Gastrocnemius medialis (tissue), 4 donors: ENCODE measurements at regions of chr19 and their contacts with region 1.

Region 1: DNA sequence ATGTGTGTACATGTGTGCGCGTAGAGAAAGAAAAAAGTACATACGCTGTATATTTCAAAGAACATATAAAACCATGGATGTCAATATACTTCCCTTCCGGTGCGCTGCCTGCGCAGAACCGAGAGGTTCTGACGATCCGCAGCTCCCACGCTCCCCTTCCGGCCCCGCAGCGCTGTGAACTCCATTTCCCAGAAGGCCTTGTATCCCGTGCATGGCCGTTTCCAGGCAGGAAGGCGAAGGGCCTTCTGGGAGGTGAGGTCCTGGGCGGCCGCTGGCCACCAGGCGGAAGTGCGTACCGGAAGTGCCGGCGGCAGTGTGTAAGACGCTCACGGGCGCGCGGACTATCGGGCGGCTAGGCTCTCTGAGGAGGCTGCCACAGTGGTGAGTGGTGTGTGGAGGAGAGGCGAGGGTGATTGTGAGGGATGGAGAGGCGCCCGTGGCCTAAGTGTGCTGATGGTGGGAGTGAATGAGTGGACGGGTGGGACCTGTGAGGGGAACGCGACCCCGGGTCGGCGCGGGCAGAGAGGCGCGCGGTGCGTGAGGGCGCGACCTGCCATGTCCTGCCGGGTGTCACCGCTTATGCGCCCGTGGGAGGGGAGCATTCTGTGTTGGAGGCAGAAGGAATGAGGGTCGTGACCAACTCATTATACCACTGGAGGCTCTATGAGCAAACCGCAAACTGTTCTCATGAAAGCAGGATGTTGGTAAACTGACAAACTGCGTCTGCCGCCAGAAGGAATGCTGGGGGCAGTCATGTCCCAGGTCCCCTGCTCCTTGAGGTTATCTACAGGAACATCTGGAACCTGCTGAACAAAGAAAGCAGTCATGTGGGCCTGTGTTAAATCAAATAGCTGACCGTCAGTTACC is at the start of gene ERVK3-1:
- DNase-seq: peak; percentile 93 to 96
- ATAC-seq: peak; percentile 99
- H3K4me3 ChIP-seq: peak within 1 kb of the TSS; percentile 66 to 93 (median 86)
- H3K27ac ChIP-seq: peak within 1 kb of the TSS; percentile 85 to 93 (median 89)
- H3K4me1 ChIP-seq: peaks cover 12 to 14% of the 10 kb centered on the region in 2 donors
- H3K27me3 ChIP-seq: peaks cover 0 to 5% (median 0%) of the 10 kb centered on the region in 3 donors
- CTCF ChIP-seq: peak in 3 of 5 experiments; percentile 24 to 45 (median 24)
- POLR2A ChIP-seq: peak; percentile 84 to 87
- total RNA-seq, gene ERVK3-1: 27.1 to 38.2 (median 32.4) TPM

Region 2: DNA sequence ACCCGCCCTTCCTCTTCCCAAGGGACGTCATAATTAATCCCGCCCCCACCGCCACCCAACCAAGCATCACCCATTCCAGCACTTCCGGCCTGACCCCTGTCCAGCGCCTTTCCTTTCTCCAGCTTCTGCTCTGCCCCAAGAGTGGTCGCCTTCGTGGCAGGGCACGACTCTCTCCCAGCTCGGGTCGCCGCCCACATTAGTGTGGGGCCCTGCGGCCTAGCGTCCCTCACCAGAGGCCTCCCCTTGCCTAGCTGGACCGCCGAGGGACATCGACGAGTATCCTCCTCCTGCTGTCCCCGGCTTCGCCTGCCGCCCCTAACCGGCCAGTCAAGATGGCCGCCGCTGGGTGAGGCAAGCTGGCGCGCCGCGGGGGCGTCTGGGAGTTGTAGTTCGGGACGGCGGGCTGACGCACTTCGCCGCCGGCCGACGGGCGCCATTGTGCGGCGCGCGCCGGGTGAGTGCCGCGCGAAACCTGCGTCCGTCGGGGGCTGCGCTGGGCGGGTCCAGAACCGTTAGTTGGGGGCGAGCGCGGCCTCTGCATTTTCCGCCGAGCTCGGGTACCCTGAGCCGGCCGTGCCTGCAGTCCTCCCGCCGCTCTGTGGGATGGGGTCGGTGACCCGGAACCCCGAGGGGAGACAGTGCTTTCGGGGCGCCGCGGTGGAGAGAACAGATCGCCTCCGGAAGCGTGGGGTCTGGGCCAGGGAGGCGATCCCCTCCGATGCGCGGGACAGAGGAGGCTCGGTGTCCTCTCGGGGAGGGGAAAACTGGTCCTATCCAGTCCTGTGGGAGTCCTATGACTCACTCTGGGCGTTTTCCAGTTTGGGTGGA is 122.1 kb before region 1 on chr19 and contains the start of gene ZNF274:
- in situ Hi-C with region 1: no loop called
- intact Hi-C with region 1: loop called (anchors 1 kb)
- DNase-seq: peak; percentile 84 to 92
- ATAC-seq: peak; percentile 92 to 95
- H3K4me3 ChIP-seq: peak within 1 kb of the TSS; percentile 82 to 94 (median 92)
- H3K27ac ChIP-seq: peak within 1 kb of the TSS; percentile 92 to 99 (median 98)
- H3K4me1 ChIP-seq: peaks cover 0 to 5% of the 10 kb centered on the region in 2 donors
- H3K27me3 ChIP-seq: no peaks in the 10 kb centered on the region
- CTCF ChIP-seq: no peak
- POLR2A ChIP-seq: peak; percentile 88 to 94
- total RNA-seq, gene ZNF274: 9.0 to 20.7 (median 13.4) TPM

Region 3: GRCh38 chr19:58326914-58327726 is 21.8 kb after region 1 on chr19 and contains the start of gene ZSCAN22:
- in situ Hi-C with region 1: no loop called
- intact Hi-C with region 1: loop called (anchors 1 kb)
- DNase-seq: peak; percentile 95 to 96
- ATAC-seq: peak; percentile 98
- H3K4me3 ChIP-seq: peak within 1 kb of the TSS; percentile 91 to 96 (median 94)
- H3K27ac ChIP-seq: peak within 1 kb of the TSS; percentile 94 to 99 (median 98)
- H3K4me1 ChIP-seq: peaks cover 24 to 29% of the 10 kb centered on the region in 2 donors
- H3K27me3 ChIP-seq: no peaks in the 10 kb centered on the region
- CTCF ChIP-seq: no peak
- POLR2A ChIP-seq: peak; percentile 79 to 81
- total RNA-seq, gene ZSCAN22: 1.1 to 2.4 (median 1.8) TPM

Region 4: DNA sequence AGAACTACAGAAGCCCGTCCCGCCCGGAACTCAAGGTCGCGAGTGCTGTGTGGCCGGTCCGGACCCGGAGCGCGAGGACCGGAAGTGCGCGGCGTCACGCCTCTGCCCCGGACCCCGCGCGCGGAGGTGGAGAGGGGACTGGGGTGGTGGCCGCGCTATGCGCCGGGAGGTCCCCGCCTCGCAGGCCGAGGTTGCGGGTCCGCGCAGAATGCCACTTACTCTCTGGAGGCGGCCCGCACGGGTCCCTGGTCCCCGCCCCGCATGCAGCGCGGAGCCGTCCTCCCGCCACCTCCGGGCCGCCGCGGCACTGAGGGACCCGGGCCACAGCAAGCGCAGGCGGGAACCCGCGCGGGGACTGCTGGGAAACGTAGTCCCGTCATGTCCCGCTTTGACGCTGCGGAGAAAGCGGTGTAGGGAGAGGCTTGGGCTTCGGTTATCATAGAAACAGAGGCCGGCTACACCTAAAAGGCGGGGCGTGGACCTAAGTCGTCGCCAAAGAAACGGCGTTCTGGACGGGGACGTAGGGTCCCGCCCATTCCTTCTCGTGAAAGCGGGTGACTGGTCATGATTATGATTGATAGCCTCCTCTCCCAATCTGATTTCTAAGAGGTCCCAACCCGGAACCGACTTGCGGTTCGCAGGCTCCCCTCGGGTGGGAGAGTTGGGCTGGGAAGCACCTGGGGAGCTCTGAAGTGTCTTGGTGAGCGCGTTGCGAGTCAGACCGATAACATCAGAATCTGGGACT is 75.6 kb after region 1 on chr19 and contains the start of gene ZNF837:
- in situ Hi-C with region 1: no loop called
- intact Hi-C with region 1: loop called (anchors 1 kb)
- DNase-seq: peak; percentile 97 to 100
- ATAC-seq: peak; percentile 96 to 97
- H3K4me3 ChIP-seq: peak within 1 kb of the TSS; percentile 70 to 95 (median 81)
- H3K27ac ChIP-seq: peak within 1 kb of the TSS; percentile 78 to 99 (median 94)
- H3K4me1 ChIP-seq: peaks cover 30 to 36% of the 10 kb centered on the region in 2 donors
- H3K27me3 ChIP-seq: no peaks in the 10 kb centered on the region
- CTCF ChIP-seq: peak in 1 of 5 experiments; percentile 19
- POLR2A ChIP-seq: peak; percentile 82 to 84
- total RNA-seq, gene ZNF837: 0.11 to 0.36 TPM in 2 of 4 donors, not detected in the others

Region 5: DNA sequence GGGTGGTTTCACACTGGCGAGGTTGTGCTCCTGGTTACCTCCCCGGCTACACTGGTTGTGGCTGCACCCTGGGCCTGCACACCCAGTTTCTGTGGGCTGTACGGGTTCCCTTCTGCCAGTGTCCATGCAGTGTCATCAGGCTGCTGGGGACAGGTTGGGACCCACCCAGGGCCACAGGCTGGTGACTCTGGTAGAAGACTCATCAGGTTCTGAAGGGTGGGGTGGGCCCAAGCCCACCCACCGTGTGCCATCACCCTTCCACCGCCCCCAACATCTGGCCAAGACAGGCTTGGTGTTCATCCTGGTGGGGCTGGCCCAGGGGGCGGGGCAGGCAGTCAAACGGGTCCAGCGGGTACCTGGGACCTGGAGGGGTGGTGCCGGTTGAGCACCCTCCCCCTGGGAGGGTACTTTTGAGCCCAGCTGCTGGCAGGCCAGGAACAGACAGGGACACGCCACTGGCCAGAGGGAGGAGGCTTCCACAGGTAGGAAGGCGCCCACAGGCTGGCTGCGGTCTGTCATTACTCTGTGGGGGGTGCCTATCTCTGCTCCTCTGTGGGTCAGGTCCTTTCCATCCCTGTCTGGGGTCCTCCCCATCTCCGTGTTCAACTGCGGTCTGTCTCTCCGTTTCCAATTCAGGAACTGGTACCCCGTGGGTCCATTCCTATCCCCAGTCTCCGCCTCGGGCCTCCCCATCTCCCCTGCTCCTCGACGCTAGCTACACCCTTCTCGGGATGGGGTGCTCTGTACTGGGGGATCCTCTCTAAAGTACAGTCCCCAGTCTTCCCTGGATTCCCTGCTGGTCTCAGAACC is 90.1 kb after region 1 on chr19 and contains the start of gene RNF225:
- in situ Hi-C with region 1: no loop called
- intact Hi-C with region 1: no loop called
- DNase-seq: no peak
- ATAC-seq: no peak
- H3K4me3 ChIP-seq: peak within 1 kb of the TSS in 1 of 4 donors; percentile 3
- H3K27ac ChIP-seq: no peak within 1 kb of the TSS
- H3K4me1 ChIP-seq: peaks cover 5 to 7% of the 10 kb centered on the region in 2 donors
- H3K27me3 ChIP-seq: peaks cover 18 to 25% (median 19%) of the 10 kb centered on the region in 3 donors
- CTCF ChIP-seq: no peak
- POLR2A ChIP-seq: no peak
- total RNA-seq, gene RNF225: not detected

Region 6: DNA sequence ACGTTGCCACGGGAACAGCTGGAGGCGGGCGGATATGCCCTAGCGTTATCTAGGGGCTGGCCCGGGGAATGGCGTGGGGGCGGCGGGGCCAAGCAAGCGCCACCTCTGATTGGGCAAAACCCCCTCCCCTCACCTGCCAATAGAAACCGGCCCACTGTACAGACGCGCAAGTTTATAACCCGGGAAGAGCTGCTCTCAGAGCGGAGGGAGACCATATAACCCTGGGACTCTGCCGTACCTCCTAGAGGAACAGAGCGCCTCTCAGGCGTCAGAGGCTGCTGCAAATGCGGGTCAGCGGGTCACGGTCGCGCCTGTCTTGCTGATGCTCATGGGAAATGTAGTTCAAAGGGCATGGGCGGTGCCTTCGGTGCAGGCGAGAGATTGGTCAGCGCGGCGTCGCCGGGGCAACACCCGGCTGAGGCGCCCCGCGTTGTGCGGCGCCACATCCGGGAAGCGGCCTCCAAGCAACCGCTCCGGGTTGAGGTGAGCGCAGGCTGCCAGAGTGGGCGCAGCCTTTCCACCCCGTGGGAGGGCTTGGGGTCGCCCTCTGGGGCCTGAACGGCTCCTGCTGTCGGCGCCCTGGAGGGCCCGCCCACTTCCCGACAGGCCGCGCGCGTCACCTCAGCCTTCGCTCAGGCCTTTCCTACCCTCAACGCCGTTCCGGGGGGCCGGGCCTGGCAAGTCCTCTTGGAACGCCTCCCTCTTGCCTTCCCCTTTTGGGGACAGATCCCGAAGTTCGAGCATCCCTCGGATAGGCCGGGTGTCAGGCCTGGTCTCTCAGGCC is 170.6 kb after region 1 on chr19 and contains the start of gene ZNF446:
- in situ Hi-C with region 1: no loop called
- intact Hi-C with region 1: loop called (anchors 1 kb)
- DNase-seq: peak; percentile 94 to 95
- ATAC-seq: peak; percentile 97 to 98
- H3K4me3 ChIP-seq: peak within 1 kb of the TSS; percentile 76 to 83 (median 78)
- H3K27ac ChIP-seq: peak within 1 kb of the TSS; percentile 82 to 95 (median 86)
- H3K4me1 ChIP-seq: peaks cover 15 to 22% of the 10 kb centered on the region in 2 donors
- H3K27me3 ChIP-seq: no peaks in the 10 kb centered on the region
- CTCF ChIP-seq: no peak
- POLR2A ChIP-seq: peak; percentile 60 to 65
- total RNA-seq, gene ZNF446: 7.5 to 13.1 (median 8.9) TPM